Right ventricle myocardium inferior (tissue), 1 donor: ENCODE measurements at regions of chr13 and their contacts with region 1.

Region 1: GRCh38 chr13:113044391-113045114 is 61.0 kb upstream of the F7 start:
- DNase-seq: no peak
- ATAC-seq: no peak

Region 2: GRCh38 chr13:113129921-113130750 is 85.6 kb after region 1 on chr13:
- intact Hi-C with region 1: loop called (anchors 5 kb)
- DNase-seq: peak; percentile 72
- ATAC-seq: peak; percentile 72